PC-3 (cell line): ENCODE measurements at regions of chr2 and their contacts with region 1.

Region 1: GRCh38 chr2:10150436-10150835 is 27.9 kb downstream of the RRM2 start:
- DNase-seq: no peak
- ATAC-seq: no peak
- H3K4me3 ChIP-seq: no peak overlapping the region
- H3K27ac ChIP-seq: no peak overlapping the region
- H3K4me1 ChIP-seq: no peaks in the 10 kb centered on the region
- H3K27me3 ChIP-seq: no peaks in the 10 kb centered on the region
- CTCF ChIP-seq: no peak

Region 2: DNA sequence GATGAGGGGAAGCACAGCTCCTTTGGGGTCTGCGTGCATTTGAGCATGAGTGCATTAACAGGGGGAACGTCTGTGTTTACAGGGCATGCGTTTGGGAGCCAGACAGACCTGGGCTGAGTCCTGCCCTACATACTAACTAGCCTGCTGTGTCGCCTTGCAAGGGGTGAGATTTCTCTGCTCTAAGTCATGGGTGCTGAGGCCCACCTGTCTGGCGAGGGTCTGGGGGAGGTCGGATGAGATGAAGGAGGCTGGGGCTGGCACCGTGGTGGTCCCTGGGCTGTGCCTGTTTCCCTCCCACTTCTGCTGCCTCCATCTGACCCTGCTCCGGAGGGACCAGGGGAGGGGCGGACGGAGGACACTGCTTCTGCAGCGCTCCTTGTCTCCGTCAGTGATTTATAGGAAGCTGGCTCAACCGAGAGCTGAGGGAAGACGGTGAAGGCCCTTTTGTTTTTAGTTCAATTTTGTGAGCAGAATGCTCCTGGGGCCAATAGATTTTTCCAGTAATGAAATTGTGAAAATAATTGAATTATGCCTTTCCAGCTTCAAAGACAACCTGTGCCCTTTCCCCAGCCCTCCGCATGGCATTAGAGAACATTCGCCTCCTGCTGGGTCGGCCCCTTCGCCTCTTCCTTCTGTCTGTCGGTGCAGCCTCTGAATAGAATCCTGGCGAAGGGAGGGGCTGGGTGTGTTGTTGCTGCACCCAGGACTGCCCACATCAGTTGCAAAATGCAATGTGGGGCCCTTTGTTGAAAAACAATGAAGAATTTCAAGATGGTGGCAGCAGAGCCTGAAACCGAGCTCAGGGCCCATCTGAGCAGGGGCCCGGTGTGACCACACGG is 21.8 kb after region 1 on chr2:
- CTCF ChIA-PET with region 1: no interaction called
- POLR2A ChIA-PET with region 1: interaction called, 13 read pairs
- intact Hi-C with region 1: no loop called
- DNase-seq: no peak
- ATAC-seq: no peak
- H3K4me3 ChIP-seq: no peak overlapping the region
- H3K27ac ChIP-seq: no peak overlapping the region
- H3K4me1 ChIP-seq: peaks cover 14% of the 10 kb centered on the region
- H3K27me3 ChIP-seq: no peaks in the 10 kb centered on the region
- CTCF ChIP-seq: no peak